T-cell (primary cell): ENCODE measurements at regions of chr7 and their contacts with region 1.

Region 1: GRCh38 chr7:22488643-22489462 is 11.1 kb downstream of the STEAP1B start:
- DNase-seq: peak in 32 of 35 experiments; percentile 12 to 79 (median 38)
- ATAC-seq: peak; percentile 40 to 57 (median 44)
- H3K4me3 ChIP-seq: no peak overlapping the region
- H3K4me3 Mint-ChIP-seq: no peak overlapping the region
- H3K27ac ChIP-seq: no peak overlapping the region
- H3K27ac Mint-ChIP-seq: no peak overlapping the region
- H3K4me1 ChIP-seq: peaks cover 0 to 3% of the 10 kb centered on the region in 2 experiments
- H3K4me1 Mint-ChIP-seq: no peaks in the 10 kb centered on the region
- H3K27me3 ChIP-seq: peaks cover 0 to 12% of the 10 kb centered on the region in 2 experiments
- H3K27me3 Mint-ChIP-seq: peaks cover 10 to 12% of the 10 kb centered on the region in 2 donors

Region 2: DNA sequence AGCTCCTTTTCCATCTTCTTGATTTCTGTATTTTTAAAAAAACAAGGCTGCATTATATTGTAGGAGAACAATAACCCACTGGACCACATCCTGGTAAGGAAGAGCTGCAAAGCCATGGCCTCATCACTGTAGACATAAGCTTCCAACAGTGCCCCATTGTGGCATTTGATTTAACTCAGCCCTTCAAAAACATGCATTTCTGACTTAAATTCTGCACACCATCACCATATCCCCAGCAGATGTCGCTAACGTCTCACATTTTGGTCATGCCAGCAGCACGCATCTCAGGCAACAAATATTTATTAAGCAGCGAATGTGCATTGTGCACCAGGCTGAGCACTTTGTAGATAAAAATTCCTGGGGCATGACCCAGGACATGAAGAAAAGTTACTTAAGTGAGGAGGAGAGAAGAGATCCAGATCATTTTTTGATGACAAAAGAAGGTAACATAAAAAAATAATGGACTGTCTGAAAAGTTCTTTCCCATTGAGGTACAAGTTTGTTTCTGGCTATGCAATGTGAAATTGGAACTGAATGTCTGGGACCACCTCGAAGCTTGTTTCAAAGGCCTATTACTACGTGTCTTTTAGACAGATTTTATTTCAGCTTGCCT is 378.5 kb before region 1 on chr7:
- CTCF ChIA-PET with region 1: interaction called, 13 read pairs
- POLR2A ChIA-PET with region 1: no interaction called
- DNase-seq: peak in 34 of 35 experiments; percentile 22 to 87 (median 54)
- ATAC-seq: peak; percentile 63 to 80 (median 72)
- H3K4me3 ChIP-seq: no peak overlapping the region
- H3K4me3 Mint-ChIP-seq: no peak overlapping the region
- H3K27ac ChIP-seq: no peak overlapping the region
- H3K27ac Mint-ChIP-seq: no peak overlapping the region
- H3K4me1 ChIP-seq: no peaks in the 10 kb centered on the region
- H3K4me1 Mint-ChIP-seq: no peaks in the 10 kb centered on the region
- H3K27me3 ChIP-seq: peaks cover 0 to 16% of the 10 kb centered on the region in 2 experiments
- H3K27me3 Mint-ChIP-seq: peaks cover 2 to 3% of the 10 kb centered on the region in 2 donors

Region 3: DNA sequence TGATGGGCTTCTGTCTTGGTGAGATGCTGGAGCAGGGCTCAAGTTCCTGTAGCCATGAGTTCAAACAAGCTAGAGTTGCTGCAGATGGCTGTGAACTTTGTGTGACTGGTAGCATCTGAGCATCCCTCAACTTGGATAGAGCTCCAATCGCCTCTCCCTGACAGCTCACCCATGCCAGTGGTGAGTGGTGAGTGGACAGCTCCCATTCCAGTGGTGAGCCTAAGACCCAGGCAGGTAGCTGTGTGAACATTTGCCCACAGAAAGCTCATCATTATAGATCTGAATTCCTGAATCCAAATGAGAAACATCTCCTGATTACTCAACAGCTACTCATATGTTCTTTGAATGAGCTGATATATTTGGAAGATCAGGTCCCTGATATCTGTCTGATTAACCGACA is 14.2 kb before region 1 on chr7:
- CTCF ChIA-PET with region 1: no interaction called
- POLR2A ChIA-PET with region 1: no interaction called
- DNase-seq: no peak
- ATAC-seq: no peak
- H3K4me3 ChIP-seq: no peak overlapping the region
- H3K4me3 Mint-ChIP-seq: no peak overlapping the region
- H3K27ac ChIP-seq: no peak overlapping the region
- H3K27ac Mint-ChIP-seq: no peak overlapping the region
- H3K4me1 ChIP-seq: no peaks in the 10 kb centered on the region
- H3K4me1 Mint-ChIP-seq: no peaks in the 10 kb centered on the region
- H3K27me3 ChIP-seq: no peaks in the 10 kb centered on the region
- H3K27me3 Mint-ChIP-seq: no peaks in the 10 kb centered on the region